Psoas muscle (tissue), 8 donors: ENCODE measurements at regions of chr12 and their contacts with region 1.

Region 1: GRCh38 chr12:54191550-54192022 is 2.8 kb upstream of the SMUG1 start:
- DNase-seq: peak; percentile 80 to 92
- ATAC-seq: peak; percentile 75 to 81 (median 76)
- H3K4me3 ChIP-seq: peak overlapping the region; percentile 6
- H3K27ac ChIP-seq: peak overlapping the region; percentile 19
- H3K4me1 ChIP-seq: peaks cover 25% of the 10 kb centered on the region
- H3K27me3 ChIP-seq: no peaks in the 10 kb centered on the region
- CTCF ChIP-seq: peak; percentile 86

Region 2: GRCh38 chr12:54126696-54127537 is 64.7 kb before region 1 on chr12:
- intact Hi-C with region 1: loop called in 1 of 2 experiments (anchors 5 kb)
- DNase-seq: peak; percentile 76 to 84
- ATAC-seq: peak; percentile 70 to 85 (median 76)
- H3K4me3 ChIP-seq: peak overlapping the region; percentile 77
- H3K27ac ChIP-seq: peak overlapping the region; percentile 34
- H3K4me1 ChIP-seq: no peaks in the 10 kb centered on the region
- H3K27me3 ChIP-seq: peaks cover 0 to 41% (median 22%) of the 10 kb centered on the region in 3 donors
- CTCF ChIP-seq: no peak